ENCODE measurements at regions of chr1 and their contacts with region 1.

Region 1: DNA sequence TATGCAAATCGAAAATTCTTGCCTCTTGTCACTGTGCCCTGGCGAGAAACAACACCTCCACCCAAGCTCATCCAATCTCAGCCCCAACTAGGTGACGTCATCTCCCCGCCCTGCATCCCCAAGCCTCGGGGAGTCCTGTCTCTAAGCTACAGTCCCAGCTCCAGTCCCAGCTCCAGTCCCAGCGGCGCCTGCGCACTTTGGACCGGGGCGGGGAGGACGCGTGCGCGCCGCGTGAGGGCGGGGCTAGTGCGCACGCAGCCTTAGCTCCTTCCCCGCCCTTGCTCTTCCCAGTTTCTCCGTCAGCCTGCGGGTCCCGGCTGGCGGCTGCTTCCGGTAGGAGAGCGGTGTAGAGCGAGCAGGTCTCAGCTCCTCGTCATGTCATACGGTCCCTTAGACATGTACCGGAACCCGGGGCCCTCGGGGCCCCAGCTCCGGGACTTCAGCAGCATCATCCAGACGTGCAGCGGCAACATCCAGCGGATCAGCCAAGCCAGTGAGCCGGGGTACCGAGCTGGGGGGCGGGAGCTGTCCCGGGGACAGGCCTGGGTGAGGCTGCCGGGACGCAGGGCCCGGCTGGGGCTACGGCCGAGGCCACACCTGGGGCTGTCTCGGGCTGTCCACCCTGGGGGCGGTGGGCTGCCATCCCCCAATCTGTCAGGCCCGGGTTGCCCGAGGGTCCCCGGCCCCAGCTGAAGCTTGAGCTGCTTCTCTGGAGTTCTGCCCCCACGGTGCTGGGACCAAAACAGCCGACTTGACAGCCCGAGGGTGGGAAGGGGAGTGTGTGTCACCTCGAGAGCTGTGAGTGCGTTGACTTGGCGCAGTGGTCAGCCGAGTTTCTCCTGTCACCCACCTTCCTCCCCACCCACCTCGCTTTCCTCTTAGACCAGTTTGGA is at the start of gene STX12:
- DNase-seq: peak; percentile 99
- H3K4me3 Mint-ChIP-seq: peak within 1 kb of the TSS; percentile 98
- H3K27ac Mint-ChIP-seq: peak within 1 kb of the TSS; percentile 98
- H3K4me1 Mint-ChIP-seq: peaks cover 31% of the 10 kb centered on the region
- H3K27me3 Mint-ChIP-seq: no peaks in the 10 kb centered on the region
- total RNA-seq, gene STX12: 22.0 and 23.9 TPM in 2 replicates

Region 2: GRCh38 chr1:27321813-27322577 is 451.2 kb before region 1 on chr1 and contains the start of gene TMEM222:
- intact Hi-C with region 1: loop called (anchors 1 kb)
- DNase-seq: peak; percentile 98
- H3K4me3 Mint-ChIP-seq: peak within 1 kb of the TSS; percentile 97
- H3K27ac Mint-ChIP-seq: peak within 1 kb of the TSS; percentile 90
- H3K4me1 Mint-ChIP-seq: peaks cover 33% of the 10 kb centered on the region
- H3K27me3 Mint-ChIP-seq: no peaks in the 10 kb centered on the region
- total RNA-seq, gene TMEM222: 44.3 and 47.4 TPM in 2 replicates

Region 3: GRCh38 chr1:27568300-27569087 is 204.7 kb before region 1 on chr1:
- intact Hi-C with region 1: loop called (anchors 5 kb)
- DNase-seq: peak; percentile 94
- H3K4me3 Mint-ChIP-seq: peak overlapping the region; percentile 67
- H3K27ac Mint-ChIP-seq: no peak overlapping the region
- H3K4me1 Mint-ChIP-seq: peaks cover 18% of the 10 kb centered on the region
- H3K27me3 Mint-ChIP-seq: no peaks in the 10 kb centered on the region

Region 4: DNA sequence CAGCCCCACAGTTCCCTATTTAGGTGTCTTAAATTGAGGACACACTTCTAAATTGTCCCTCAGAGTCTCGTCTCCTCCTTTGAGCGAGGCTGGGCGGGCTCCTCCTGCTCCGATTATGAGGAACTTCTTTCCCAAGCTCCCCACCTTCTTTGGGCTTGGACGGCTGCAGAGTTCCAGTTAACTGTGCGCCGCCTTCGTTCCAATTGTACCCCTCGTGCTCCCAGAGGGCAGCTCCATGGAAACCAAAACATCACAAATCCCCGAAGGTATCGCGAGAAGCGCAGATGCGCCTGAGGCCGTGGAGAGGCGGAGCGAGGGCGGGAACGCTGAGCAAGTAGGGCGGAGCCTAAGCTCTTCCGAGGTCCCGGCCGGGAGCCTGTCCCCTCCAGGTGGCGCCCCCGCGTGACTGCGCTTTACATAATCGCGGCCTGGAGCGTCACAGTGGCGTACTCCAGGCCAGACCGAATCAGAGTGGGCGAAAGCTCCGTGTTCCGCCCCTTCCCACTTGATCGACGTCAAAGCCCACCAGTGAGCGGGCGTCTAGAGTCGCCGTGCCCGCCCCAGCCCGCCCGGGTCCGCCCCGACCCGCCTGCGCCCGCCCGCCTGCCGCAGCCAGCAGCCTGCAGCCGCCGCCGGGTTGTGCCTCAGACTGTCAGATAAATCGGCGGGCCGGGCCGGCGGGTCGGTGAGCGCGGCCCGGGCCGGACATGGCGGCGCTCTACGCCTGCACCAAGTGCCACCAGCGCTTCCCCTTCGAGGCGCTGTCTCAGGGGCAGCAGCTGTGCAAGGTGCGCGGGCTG is 47.6 kb before region 1 on chr1 and contains the start of gene FAM76A:
- intact Hi-C with region 1: loop called (anchors 1 kb)
- DNase-seq: peak; percentile 99
- H3K4me3 Mint-ChIP-seq: peak within 1 kb of the TSS; percentile 86
- H3K27ac Mint-ChIP-seq: peak within 1 kb of the TSS; percentile 97
- H3K4me1 Mint-ChIP-seq: peaks cover 29% of the 10 kb centered on the region
- H3K27me3 Mint-ChIP-seq: no peaks in the 10 kb centered on the region
- total RNA-seq, gene FAM76A: 9.9 and 13.1 TPM in 2 replicates

Region 5: GRCh38 chr1:27872059-27872801 is 99.1 kb after region 1 on chr1 and contains the start of gene THEMIS2:
- intact Hi-C with region 1: loop called (anchors 1 kb)
- DNase-seq: peak; percentile 70
- H3K4me3 Mint-ChIP-seq: peak within 1 kb of the TSS; percentile 94
- H3K27ac Mint-ChIP-seq: peak within 1 kb of the TSS; percentile 95
- H3K4me1 Mint-ChIP-seq: peaks cover 50% of the 10 kb centered on the region
- H3K27me3 Mint-ChIP-seq: no peaks in the 10 kb centered on the region
- total RNA-seq, gene THEMIS2: 28.7 and 33.5 TPM in 2 replicates

Region 6: DNA sequence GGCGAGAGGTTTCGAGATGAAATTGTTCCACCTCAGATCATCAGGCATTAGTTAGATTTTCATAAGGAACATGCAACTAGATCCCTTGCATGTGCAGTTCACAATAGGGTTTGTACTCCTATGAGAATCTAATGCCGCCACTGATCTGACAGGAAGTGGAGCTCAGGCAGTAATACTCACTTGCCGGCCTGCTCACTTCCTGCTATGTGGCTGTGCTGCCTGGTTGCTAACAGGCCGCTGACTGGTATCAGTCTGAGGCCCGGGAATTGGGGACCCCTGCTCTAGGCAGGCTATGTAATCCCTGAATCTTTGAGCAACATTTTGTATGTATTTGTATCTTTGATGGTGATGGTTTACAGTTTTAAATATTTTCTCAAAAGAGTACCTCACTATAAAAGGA is 219.1 kb after region 1 on chr1:
- intact Hi-C with region 1: no loop called
- DNase-seq: peak; percentile 36
- H3K4me3 Mint-ChIP-seq: peak overlapping the region; percentile 37
- H3K27ac Mint-ChIP-seq: peak overlapping the region; percentile 67
- H3K4me1 Mint-ChIP-seq: peaks cover 50% of the 10 kb centered on the region
- H3K27me3 Mint-ChIP-seq: no peaks in the 10 kb centered on the region